RWPE1 (cell line): ENCODE measurements at regions of chr19 and their contacts with region 1.

Region 1: GRCh38 chr19:16829010-16829821 is at the start of gene SIN3B:
- DNase-seq: peak; percentile 95
- H3K27ac ChIP-seq: peak within 1 kb of the TSS; percentile 74
- CTCF ChIP-seq: no peak

Region 2: GRCh38 chr19:16804176-16804575 is 25.0 kb before region 1 on chr19:
- CTCF ChIA-PET with region 1: interaction called, 11 read pairs
- POLR2A ChIA-PET with region 1: no interaction called
- DNase-seq: no peak
- H3K27ac ChIP-seq: no peak overlapping the region
- CTCF ChIP-seq: no peak

Region 3: GRCh38 chr19:16861011-16861410 is 31.8 kb after region 1 on chr19:
- CTCF ChIA-PET with region 1: no interaction called
- POLR2A ChIA-PET with region 1: interaction called, 10 read pairs
- DNase-seq: no peak
- H3K27ac ChIP-seq: no peak overlapping the region
- CTCF ChIP-seq: no peak